Naive thymus-derived CD4-positive, alpha-beta T cell (primary cell): ENCODE measurements at regions of chr5 and their contacts with region 1.

Region 1: DNA sequence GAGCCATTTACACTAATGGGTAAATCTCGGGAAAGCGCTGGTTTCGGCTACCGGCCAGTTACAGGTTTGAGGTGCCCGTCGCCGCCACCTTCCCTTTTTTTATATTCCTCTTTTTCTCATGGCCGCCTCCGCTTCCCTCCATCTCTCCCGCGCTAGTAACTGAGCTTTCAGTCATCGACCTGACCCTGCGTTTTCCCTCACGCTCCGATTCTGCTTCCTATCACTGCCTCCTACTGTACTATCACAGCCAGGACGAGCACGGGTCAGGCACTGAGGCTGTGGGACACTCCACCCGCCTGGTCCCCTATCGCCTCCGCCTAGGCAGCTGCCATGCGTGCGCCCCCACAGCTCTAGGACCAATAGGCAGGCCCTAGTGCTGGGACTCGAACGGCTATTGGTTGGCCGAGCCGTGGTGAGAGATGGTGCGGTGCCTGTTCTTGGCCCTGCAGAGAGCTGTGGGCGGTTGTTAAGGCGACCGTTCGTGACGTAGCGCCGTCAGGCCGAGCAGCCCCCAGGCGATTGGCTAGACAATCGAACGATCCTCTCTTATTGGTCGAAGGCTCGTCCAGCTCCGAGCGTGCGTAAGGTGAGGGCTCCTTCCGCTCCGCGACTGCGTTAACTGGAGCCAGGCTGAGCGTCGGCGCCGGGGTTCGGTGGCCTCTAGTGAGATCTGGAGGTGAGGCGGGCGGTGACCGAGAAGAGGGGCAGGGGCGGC is at the start of gene HMGCR:
- DNase-seq: peak; percentile 82 to 97 (median 95)
- ATAC-seq: peak; percentile 96
- H3K4me3 ChIP-seq: peak within 1 kb of the TSS; percentile 85
- H3K4me3 Mint-ChIP-seq: no peak within 1 kb of the TSS
- H3K27ac ChIP-seq: peak within 1 kb of the TSS; percentile 83
- H3K27ac Mint-ChIP-seq: no peak within 1 kb of the TSS
- H3K4me1 ChIP-seq: peaks cover 8 to 10% of the 10 kb centered on the region in 2 donors
- H3K4me1 Mint-ChIP-seq: peaks cover 18 to 41% (median 37%) of the 10 kb centered on the region in 7 donors
- H3K27me3 ChIP-seq: no peaks in the 10 kb centered on the region
- H3K27me3 Mint-ChIP-seq: no peaks in the 10 kb centered on the region
- total RNA-seq, gene HMGCR: 38.8 to 57.3 (median 43.8) TPM

Region 2: DNA sequence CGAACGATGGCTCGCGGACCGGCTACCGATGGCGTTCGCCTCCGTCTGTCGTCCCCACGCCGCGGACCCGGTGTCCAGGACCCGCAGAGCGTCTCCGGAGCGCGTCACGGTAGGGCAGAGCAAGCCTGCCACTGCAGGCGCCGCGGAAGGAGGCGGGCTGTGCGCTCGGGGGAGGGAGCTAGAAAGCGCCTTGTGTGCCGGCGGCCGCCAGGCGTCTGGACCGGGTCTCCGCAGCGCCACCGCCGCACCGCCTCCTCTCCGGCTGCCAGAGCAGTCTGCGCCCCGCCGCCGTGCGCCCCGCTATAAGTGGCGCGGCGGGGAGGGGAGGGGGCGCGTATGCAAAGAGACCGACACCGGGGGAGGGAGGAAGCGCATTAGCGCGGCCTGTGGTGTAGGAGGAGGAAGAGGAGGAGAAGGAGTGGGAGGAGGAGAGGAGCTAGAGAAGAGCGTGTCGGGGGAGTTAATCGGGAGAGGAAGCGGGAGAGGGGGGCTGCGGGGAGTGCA is 696.3 kb before region 1 on chr5 and contains the start of gene ENC1:
- CTCF ChIA-PET with region 1: no interaction called
- POLR2A ChIA-PET with region 1: no interaction called
- intact Hi-C with region 1: loop called in 1 of 2 experiments (anchors 1 kb)
- DNase-seq: peak; percentile 64 to 88 (median 75)
- ATAC-seq: peak; percentile 86
- H3K4me3 ChIP-seq: peak within 1 kb of the TSS; percentile 42
- H3K4me3 Mint-ChIP-seq: peak within 1 kb of the TSS; percentile 81 to 99 (median 92)
- H3K27ac ChIP-seq: peak within 1 kb of the TSS; percentile 72
- H3K27ac Mint-ChIP-seq: peak within 1 kb of the TSS in 8 of 9 donors; percentile 42 to 90 (median 74)
- H3K4me1 ChIP-seq: peaks cover 3 to 4% of the 10 kb centered on the region in 2 donors
- H3K4me1 Mint-ChIP-seq: peaks cover 28 to 45% (median 31%) of the 10 kb centered on the region in 7 donors
- H3K27me3 ChIP-seq: no peaks in the 10 kb centered on the region
- H3K27me3 Mint-ChIP-seq: peaks cover 0 to 79% (median 34%) of the 10 kb centered on the region in 5 donors
- total RNA-seq, gene ENC1: 1.3 to 18.1 (median 1.6) TPM

Region 3: GRCh38 chr5:74865804-74866595 is 470.8 kb before region 1 on chr5 and contains the start of gene FAM169A:
- CTCF ChIA-PET with region 1: no interaction called
- POLR2A ChIA-PET with region 1: interaction called, 6 read pairs
- intact Hi-C with region 1: loop called in 1 of 2 experiments (anchors 5 kb)
- DNase-seq: peak; percentile 40 to 71 (median 61)
- ATAC-seq: peak; percentile 81
- H3K4me3 ChIP-seq: peak within 1 kb of the TSS; percentile 69
- H3K4me3 Mint-ChIP-seq: peak within 1 kb of the TSS; percentile 87 to 99 (median 97)
- H3K27ac ChIP-seq: peak within 1 kb of the TSS; percentile 78
- H3K27ac Mint-ChIP-seq: peak within 1 kb of the TSS; percentile 79 to 97 (median 95)
- H3K4me1 ChIP-seq: peaks cover 4 to 8% of the 10 kb centered on the region in 2 donors
- H3K4me1 Mint-ChIP-seq: peaks cover 7 to 49% (median 42%) of the 10 kb centered on the region in 7 donors
- H3K27me3 ChIP-seq: no peaks in the 10 kb centered on the region
- H3K27me3 Mint-ChIP-seq: peaks cover 0 to 26% (median 0%) of the 10 kb centered on the region in 5 donors
- total RNA-seq, gene FAM169A: 2.3 to 22.4 (median 15.6) TPM

Region 4: GRCh38 chr5:75059912-75060545 is 276.8 kb before region 1 on chr5:
- CTCF ChIA-PET with region 1: no interaction called
- POLR2A ChIA-PET with region 1: interaction called, 6 read pairs
- intact Hi-C with region 1: loop called in 1 of 2 experiments (anchors 1 kb)
- DNase-seq: peak in 7 of 9 donors; percentile 79 to 96 (median 92)
- ATAC-seq: peak; percentile 96
- H3K4me3 ChIP-seq: no peak overlapping the region
- H3K4me3 Mint-ChIP-seq: peak overlapping the region in 9 of 10 donors; percentile 68 to 85 (median 75)
- H3K27ac ChIP-seq: peak overlapping the region; percentile 77
- H3K27ac Mint-ChIP-seq: peak overlapping the region; percentile 70 to 99 (median 98)
- H3K4me1 ChIP-seq: peaks cover 32 to 81% of the 10 kb centered on the region in 2 donors
- H3K4me1 Mint-ChIP-seq: peaks cover 25 to 96% (median 83%) of the 10 kb centered on the region in 7 donors
- H3K27me3 ChIP-seq: no peaks in the 10 kb centered on the region
- H3K27me3 Mint-ChIP-seq: peaks cover 0 to 5% (median 0%) of the 10 kb centered on the region in 5 donors

Region 5: GRCh38 chr5:75681125-75681830 is 344.5 kb after region 1 on chr5:
- CTCF ChIA-PET with region 1: interaction called, 3 read pairs
- POLR2A ChIA-PET with region 1: interaction called, 3 read pairs
- intact Hi-C with region 1: loop called (anchors 1 to 2 kb)
- DNase-seq: peak in 4 of 9 donors; percentile 24 to 46 (median 38)
- ATAC-seq: peak; percentile 66
- H3K4me3 ChIP-seq: no peak overlapping the region
- H3K4me3 Mint-ChIP-seq: no peak overlapping the region
- H3K27ac ChIP-seq: no peak overlapping the region
- H3K27ac Mint-ChIP-seq: no peak overlapping the region
- H3K4me1 ChIP-seq: peaks cover 0 to 3% of the 10 kb centered on the region in 2 donors
- H3K4me1 Mint-ChIP-seq: peaks cover 7 to 27% (median 18%) of the 10 kb centered on the region in 7 donors
- H3K27me3 ChIP-seq: no peaks in the 10 kb centered on the region
- H3K27me3 Mint-ChIP-seq: no peaks in the 10 kb centered on the region